ENCODE measurements at regions of chr2 and their contacts with region 1.

Region 1: GRCh38 chr2:69375494-69376353 is 11.3 kb downstream of the GFPT1 start:
- DNase-seq: no peak
- H3K4me3 ChIP-seq: peak overlapping the region in 1 of 59 donors; percentile 13
- H3K27ac ChIP-seq: no peak overlapping the region
- H3K27me3 ChIP-seq: no peaks in the 10 kb centered on the region
- CTCF ChIP-seq: peak in 55 of 56 donors; percentile 38 to 80 (median 67)

Region 2: GRCh38 chr2:69499242-69499641 is 123.5 kb after region 1 on chr2:
- intact Hi-C with region 1: loop called in 1 of 2 experiments (anchors 5 kb)
- DNase-seq: no peak
- H3K4me3 ChIP-seq: no peak overlapping the region
- H3K27ac ChIP-seq: no peak overlapping the region
- H3K27me3 ChIP-seq: no peaks in the 10 kb centered on the region
- CTCF ChIP-seq: no peak

Measured in dorsolateral prefrontal cortex (tissue), 120 donors.